GM12878 (cell line): ENCODE measurements at regions of chr4 and their contacts with region 1.

Region 1: GRCh38 chr4:10622728-10623127 is 61.8 kb downstream of the CLNK start:
- DNase-seq: peak; percentile 26
- ATAC-seq: peak; percentile 93
- H3K4me3 ChIP-seq: no peak overlapping the region
- H3K27ac ChIP-seq: no peak overlapping the region
- H3K4me1 ChIP-seq: no peaks in the 10 kb centered on the region
- H3K27me3 ChIP-seq: no peaks in the 10 kb centered on the region
- CTCF ChIP-seq: peak; percentile 49 to 70 (median 69)
- EP300 ChIP-seq: no peak
- POLR2A ChIP-seq: no peak
- RAD21 ChIP-seq: peak; percentile 90

Region 2: DNA sequence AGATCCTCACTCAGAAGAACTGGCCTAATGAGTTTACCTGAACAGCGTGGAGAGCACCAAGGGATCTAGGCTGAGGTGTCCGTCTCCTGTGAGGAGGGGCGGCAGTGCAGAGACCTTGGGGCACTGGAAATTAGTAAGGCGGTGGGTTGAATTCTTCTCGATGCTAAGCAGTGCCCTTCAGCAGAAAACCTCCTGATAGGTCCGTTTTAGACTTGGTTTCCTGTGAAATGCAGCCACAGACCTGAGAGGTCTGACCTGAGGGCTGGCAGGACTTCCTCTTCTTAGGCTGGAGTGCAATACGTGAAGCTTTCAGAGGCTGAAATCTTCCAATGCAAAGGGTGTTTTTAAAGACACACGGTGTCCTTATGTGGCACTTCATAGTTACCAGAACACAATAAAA is 61.9 kb after region 1 on chr4 and contains the start of gene CLNK:
- CTCF ChIA-PET with region 1: interaction called, 5 read pairs
- POLR2A ChIA-PET with region 1: no interaction called
- RAD21 ChIA-PET with region 1: interaction called, 5 read pairs
- SMC1A ChIA-PET with region 1: interaction called, 5 read pairs
- in situ Hi-C with region 1: no loop called
- intact Hi-C with region 1: loop called (anchors 5 kb)
- DNase-seq: peak; percentile 77
- ATAC-seq: peak; percentile 77
- H3K4me3 ChIP-seq: peak within 1 kb of the TSS; percentile 52
- H3K27ac ChIP-seq: peak within 1 kb of the TSS; percentile 80
- H3K4me1 ChIP-seq: peaks cover 27% of the 10 kb centered on the region
- H3K27me3 ChIP-seq: no peaks in the 10 kb centered on the region
- CTCF ChIP-seq: no peak
- EP300 ChIP-seq: no peak
- POLR2A ChIP-seq: peak; percentile 52; the same call in 1 of the 2 replicates
- RAD21 ChIP-seq: peak; percentile 23; the same call in 1 of the 2 replicates
- polyA plus RNA-seq, gene CLNK: 2.1 to 2.6 TPM

Region 3: GRCh38 chr4:10808591-10808990 is 185.9 kb after region 1 on chr4:
- CTCF ChIA-PET with region 1: no interaction called
- POLR2A ChIA-PET with region 1: no interaction called
- RAD21 ChIA-PET with region 1: interaction called, 4 read pairs
- SMC1A ChIA-PET with region 1: no interaction called
- in situ Hi-C with region 1: no loop called
- intact Hi-C with region 1: loop called (anchors 10 kb)
- DNase-seq: no peak
- ATAC-seq: no peak
- H3K4me3 ChIP-seq: no peak overlapping the region
- H3K27ac ChIP-seq: no peak overlapping the region
- H3K4me1 ChIP-seq: peaks cover 4% of the 10 kb centered on the region
- H3K27me3 ChIP-seq: no peaks in the 10 kb centered on the region
- CTCF ChIP-seq: no peak
- EP300 ChIP-seq: no peak
- POLR2A ChIP-seq: no peak
- RAD21 ChIP-seq: no peak

Region 4: GRCh38 chr4:11073621-11074051 is 450.9 kb after region 1 on chr4:
- CTCF ChIA-PET with region 1: no interaction called
- POLR2A ChIA-PET with region 1: no interaction called
- RAD21 ChIA-PET with region 1: no interaction called
- SMC1A ChIA-PET with region 1: no interaction called
- in situ Hi-C with region 1: no loop called
- intact Hi-C with region 1: loop called (anchors 5 kb)
- DNase-seq: no peak
- ATAC-seq: no peak
- H3K4me3 ChIP-seq: no peak overlapping the region
- H3K27ac ChIP-seq: no peak overlapping the region
- H3K4me1 ChIP-seq: no peaks in the 10 kb centered on the region
- H3K27me3 ChIP-seq: no peaks in the 10 kb centered on the region
- CTCF ChIP-seq: no peak
- EP300 ChIP-seq: no peak
- POLR2A ChIP-seq: no peak
- RAD21 ChIP-seq: no peak